Breast epithelium (tissue), 4 donors: ENCODE measurements at regions of chr3 and their contacts with region 1.

Region 1: GRCh38 chr3:140863580-140864009 is 78.0 kb upstream of the SLC25A36 start:
- DNase-seq: peak in 1 of 2 donors; percentile 20
- H3K4me3 ChIP-seq: no peak overlapping the region
- H3K27ac ChIP-seq: no peak overlapping the region
- H3K4me1 ChIP-seq: no peaks in the 10 kb centered on the region
- H3K27me3 ChIP-seq: no peaks in the 10 kb centered on the region
- CTCF ChIP-seq: peak in 2 of 3 donors; percentile 45 to 55
- POLR2A ChIP-seq: no peak

Region 2: GRCh38 chr3:139870000-139870675 is 993.5 kb before region 1 on chr3:
- intact Hi-C with region 1: loop called (anchors 5 kb)
- DNase-seq: no peak
- H3K4me3 ChIP-seq: no peak overlapping the region
- H3K27ac ChIP-seq: no peak overlapping the region
- H3K4me1 ChIP-seq: no peaks in the 10 kb centered on the region
- H3K27me3 ChIP-seq: no peaks in the 10 kb centered on the region
- CTCF ChIP-seq: no peak
- POLR2A ChIP-seq: no peak

Region 3: DNA sequence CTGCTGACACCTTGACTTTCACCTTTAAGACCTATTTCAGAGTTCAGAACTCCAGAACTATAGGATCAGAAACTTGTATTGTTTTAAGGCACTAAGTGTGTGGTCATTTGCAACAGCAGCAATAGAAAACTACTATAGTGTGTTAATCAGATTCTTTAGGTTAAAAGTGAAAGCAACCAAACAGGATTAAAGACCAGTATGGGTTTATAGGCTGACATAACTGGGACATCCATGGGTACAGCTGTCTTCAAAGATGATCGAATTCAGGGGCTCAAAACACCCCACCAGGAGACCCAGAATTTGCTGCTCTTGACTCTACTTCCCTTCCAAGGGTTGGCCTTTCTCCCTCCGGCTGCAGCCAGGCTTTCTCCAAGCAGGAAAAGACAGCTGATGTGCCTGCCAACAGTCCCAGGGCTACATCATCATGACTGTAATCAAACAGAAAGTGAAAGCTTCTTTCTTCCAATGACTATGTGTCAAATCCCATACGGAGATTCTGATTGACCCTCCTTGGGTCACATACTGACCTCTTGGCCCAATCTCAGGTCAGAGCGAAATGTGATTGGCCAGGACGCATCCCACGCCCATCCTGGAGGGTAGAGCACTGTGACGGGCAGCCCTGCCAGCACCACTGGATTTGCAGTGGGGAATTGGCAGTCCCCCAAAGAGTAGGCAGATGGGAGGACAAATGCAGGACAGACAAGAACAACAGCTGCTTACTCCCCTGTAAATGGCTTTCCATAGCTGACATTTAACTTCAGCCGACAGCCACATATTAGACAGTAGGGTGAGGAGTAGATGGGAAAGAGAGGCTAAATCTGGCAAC is 823.1 kb after region 1 on chr3:
- intact Hi-C with region 1: loop called (anchors 5 kb)
- DNase-seq: peak in 1 of 2 donors; percentile 38
- H3K4me3 ChIP-seq: peak overlapping the region; percentile 36 to 75 (median 47)
- H3K27ac ChIP-seq: peak overlapping the region; percentile 63 to 82
- H3K4me1 ChIP-seq: no peaks in the 10 kb centered on the region
- H3K27me3 ChIP-seq: no peaks in the 10 kb centered on the region
- CTCF ChIP-seq: no peak
- POLR2A ChIP-seq: no peak